ENCODE measurements at regions of chr1 and their contacts with region 1.

Region 1: DNA sequence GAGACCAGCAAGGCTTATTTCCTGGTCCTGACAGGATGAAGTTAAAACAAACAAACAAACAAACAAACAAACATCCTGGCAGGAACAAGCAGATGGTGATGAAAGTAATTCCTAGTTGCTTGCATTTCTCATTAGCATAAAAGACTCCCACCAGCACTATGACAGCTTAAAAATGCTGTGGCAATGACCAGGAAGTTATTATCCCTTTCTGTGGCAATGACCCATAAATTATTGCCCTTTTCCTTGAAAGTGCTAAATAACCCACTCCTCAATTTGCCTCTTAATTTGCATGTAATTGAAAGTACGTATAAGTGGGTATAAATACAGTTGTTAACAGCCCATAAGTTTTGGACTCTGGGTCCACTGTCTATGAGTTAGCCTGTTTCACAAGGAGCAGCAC is 727.6 kb upstream of the NEGR1 start:
- DNase-seq: no peak
- ATAC-seq: no peak
- H3K4me3 ChIP-seq: no peak overlapping the region
- H3K4me3 Mint-ChIP-seq: no peak overlapping the region
- H3K27ac ChIP-seq: no peak overlapping the region
- H3K27ac Mint-ChIP-seq: no peak overlapping the region
- H3K4me1 ChIP-seq: no peaks in the 10 kb centered on the region
- H3K4me1 Mint-ChIP-seq: no peaks in the 10 kb centered on the region
- H3K27me3 ChIP-seq: no peaks in the 10 kb centered on the region
- H3K27me3 Mint-ChIP-seq: no peaks in the 10 kb centered on the region
- CTCF ChIP-seq: no peak

Region 2: GRCh38 chr1:72997624-72998023 is 12.3 kb before region 1 on chr1:
- CTCF ChIA-PET with region 1: no interaction called
- POLR2A ChIA-PET with region 1: no interaction called
- intact Hi-C with region 1: no loop called
- DNase-seq: no peak
- ATAC-seq: no peak
- H3K4me3 ChIP-seq: no peak overlapping the region
- H3K4me3 Mint-ChIP-seq: no peak overlapping the region
- H3K27ac ChIP-seq: no peak overlapping the region
- H3K27ac Mint-ChIP-seq: no peak overlapping the region
- H3K4me1 ChIP-seq: no peaks in the 10 kb centered on the region
- H3K4me1 Mint-ChIP-seq: no peaks in the 10 kb centered on the region
- H3K27me3 ChIP-seq: no peaks in the 10 kb centered on the region
- H3K27me3 Mint-ChIP-seq: no peaks in the 10 kb centered on the region
- CTCF ChIP-seq: no peak

Region 3: DNA sequence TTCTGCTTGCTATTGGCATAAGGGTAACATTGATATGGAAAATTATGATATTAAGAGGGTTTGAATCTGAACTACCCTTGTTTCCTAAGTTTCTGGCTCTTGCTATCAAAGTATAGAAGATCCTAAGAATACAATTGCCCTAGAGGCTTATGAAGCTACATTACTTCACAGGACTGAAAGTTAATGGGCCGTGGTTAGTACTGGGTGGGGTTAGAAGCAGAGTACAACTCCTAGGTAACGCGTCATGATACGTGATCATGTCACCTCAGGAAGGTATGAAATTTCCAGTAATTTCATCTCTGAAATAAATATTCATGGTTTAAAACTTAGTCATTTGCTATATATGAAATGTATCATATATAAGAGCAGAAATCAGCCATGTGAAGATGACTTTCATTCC is 16.2 kb after region 1 on chr1:
- CTCF ChIA-PET with region 1: no interaction called
- POLR2A ChIA-PET with region 1: no interaction called
- intact Hi-C with region 1: loop called in 1 of 2 experiments (anchors 1 kb)
- DNase-seq: no peak
- ATAC-seq: no peak
- H3K4me3 ChIP-seq: no peak overlapping the region
- H3K4me3 Mint-ChIP-seq: no peak overlapping the region
- H3K27ac ChIP-seq: no peak overlapping the region
- H3K27ac Mint-ChIP-seq: no peak overlapping the region
- H3K4me1 ChIP-seq: no peaks in the 10 kb centered on the region
- H3K4me1 Mint-ChIP-seq: no peaks in the 10 kb centered on the region
- H3K27me3 ChIP-seq: no peaks in the 10 kb centered on the region
- H3K27me3 Mint-ChIP-seq: no peaks in the 10 kb centered on the region
- CTCF ChIP-seq: no peak

Region 4: GRCh38 chr1:73160759-73161158 is 150.8 kb after region 1 on chr1:
- CTCF ChIA-PET with region 1: no interaction called
- POLR2A ChIA-PET with region 1: no interaction called
- intact Hi-C with region 1: no loop called
- DNase-seq: no peak
- ATAC-seq: no peak
- H3K4me3 ChIP-seq: no peak overlapping the region
- H3K4me3 Mint-ChIP-seq: no peak overlapping the region
- H3K27ac ChIP-seq: no peak overlapping the region
- H3K27ac Mint-ChIP-seq: no peak overlapping the region
- H3K4me1 ChIP-seq: no peaks in the 10 kb centered on the region
- H3K4me1 Mint-ChIP-seq: no peaks in the 10 kb centered on the region
- H3K27me3 ChIP-seq: no peaks in the 10 kb centered on the region
- H3K27me3 Mint-ChIP-seq: no peaks in the 10 kb centered on the region
- CTCF ChIP-seq: no peak

Measured in CD8-positive, alpha-beta T cell (primary cell).